ENCODE measurements at regions of chr11 and their contacts with region 1.

Region 1: DNA sequence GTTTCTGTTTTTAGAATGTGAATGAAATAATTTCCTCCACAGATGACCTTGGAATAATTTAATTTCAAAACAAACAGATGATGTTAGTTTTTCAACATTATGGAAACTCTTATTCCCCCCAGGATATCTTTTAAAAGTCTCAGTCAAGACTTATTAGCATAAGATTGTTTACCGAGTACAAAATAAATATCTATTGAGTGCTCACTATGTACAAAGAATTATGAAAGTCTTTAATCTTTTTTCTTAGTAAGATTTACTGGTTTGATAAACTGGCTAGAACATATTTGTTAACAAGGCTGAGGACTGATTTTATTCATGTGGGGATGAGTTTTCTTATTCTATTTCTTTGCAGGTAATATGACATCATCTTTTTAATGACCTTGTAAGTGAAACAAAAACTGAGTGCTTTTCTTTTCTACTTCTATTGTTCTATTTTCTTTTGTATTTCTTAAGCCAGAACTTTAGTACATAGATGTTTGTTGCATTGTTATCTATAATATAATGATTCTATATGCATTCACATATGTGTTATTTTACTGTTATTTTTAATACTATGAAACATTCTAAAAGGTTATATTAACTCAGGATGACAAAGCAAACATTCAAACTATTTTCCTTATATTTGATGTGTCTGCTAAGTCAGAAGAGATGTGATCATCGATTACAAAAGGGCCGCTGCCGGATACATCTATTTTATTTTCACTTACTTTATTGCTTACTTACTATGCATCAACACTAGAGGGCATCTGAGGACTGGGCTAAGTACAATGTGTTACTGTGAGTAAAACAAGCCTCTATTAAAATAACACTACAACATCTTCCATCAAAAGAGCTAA is 111.0 kb upstream of the ARHGAP42 start:
- DNase-seq: no peak

Region 2: DNA sequence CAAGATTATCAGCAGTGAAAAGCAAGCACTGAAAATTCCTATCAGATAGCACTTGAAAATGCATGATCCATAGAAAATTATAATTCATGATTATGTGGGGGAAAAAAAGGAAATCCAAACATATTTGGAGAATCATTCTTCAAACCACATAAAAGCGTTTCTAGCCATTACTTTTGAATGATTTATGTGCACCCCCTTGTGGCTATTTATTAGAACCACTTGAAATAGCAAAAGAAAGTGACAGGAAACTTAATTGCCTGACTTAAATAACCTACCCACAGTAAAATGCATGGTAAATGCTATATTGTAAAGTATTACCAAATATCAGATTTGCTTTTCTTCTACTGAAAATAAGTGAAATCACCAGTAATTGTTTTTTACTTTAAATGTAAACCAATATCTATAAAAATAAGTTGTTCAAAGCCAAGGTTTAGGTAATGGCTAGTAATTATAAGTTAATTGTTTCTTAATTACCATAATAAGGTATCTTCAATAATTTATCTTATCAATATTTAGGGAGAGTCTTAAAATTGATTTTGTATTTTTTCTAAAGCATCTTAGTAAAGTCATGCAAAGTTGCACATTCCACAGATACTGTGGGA is 279.5 kb after region 1 on chr11:
- intact Hi-C with region 1: loop called in 1 of 2 experiments (anchors 10 kb)
- DNase-seq: no peak

Region 3: GRCh38 chr11:100939571-100939970 is 363.5 kb after region 1 on chr11:
- intact Hi-C with region 1: loop called (anchors 5 to 10 kb)
- DNase-seq: no peak

Measured in posterior vena cava (tissue), 2 donors.